Sciatic nerve (tissue), 2 donors: ENCODE measurements at regions of chr17 and their contacts with region 1.

Region 1: DNA sequence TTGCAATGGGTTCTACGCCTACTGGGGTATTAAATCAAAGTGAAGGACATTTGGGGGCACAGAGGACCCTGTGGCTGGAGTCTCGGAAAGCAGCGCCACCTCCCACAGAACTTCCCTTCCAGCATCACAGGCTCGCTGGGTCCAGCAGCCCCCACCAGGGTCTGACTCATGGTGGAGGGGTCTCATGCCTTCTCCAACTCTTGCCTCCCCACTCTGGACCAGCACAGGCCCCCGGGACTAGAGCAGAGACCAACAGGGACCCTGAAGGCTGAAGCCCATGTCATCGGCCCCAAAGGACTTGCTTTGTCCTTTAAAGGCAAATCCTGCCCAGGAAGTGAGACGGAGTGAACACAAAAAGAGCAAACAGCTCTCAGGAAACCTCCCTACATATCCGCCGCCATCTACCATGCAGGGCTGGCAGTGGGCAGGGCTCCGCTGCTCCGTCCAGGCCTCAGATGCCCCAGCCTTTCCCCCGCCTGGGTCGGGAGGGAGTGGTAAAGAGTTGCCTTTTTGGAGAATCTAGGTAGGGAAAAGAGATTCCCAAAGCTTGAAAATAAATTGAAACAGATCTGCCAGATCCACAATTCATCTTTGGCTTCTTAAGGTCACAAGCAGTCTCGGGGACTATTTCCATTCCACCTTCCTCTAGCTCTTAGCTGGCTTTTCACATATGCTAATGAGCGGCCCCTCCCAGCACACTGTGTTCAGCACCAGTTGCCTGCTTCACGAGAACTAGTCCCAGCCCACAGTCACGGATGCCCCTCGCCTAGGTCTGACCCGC is 2.1 kb upstream of the GPRC5C start:
- DNase-seq: no peak
- ATAC-seq: peak; percentile 45

Region 2: DNA sequence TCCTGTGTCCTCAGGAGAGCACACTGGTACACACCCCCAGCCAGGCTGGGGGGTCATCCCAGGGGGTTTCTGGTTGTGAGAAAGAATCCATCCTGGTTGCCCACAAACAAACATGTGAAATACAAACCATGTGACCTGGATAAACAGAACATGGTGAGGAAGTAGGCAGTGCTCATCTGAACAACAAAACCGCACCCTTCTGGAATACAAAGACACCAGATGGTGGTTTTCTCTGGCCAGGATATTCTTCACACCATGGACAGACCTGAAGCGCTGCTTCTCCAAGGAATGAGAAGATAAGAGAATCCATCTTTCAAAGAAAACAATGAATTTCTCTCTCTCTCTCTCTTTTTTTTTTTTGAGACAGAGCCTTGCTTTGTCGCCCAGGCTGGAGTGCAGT is 1639.6 kb before region 1 on chr17:
- intact Hi-C with region 1: loop called (anchors 5 kb)
- DNase-seq: no peak
- ATAC-seq: no peak